Activated CD8-positive, alpha-beta T cell treated with anti-CD3 and anti-CD28 coated beads, Interleukin-2, amount 10 ng/mL, durations not matched to agents 7 days and 5 days (primary cell): ENCODE measurements at regions of chr6 and their contacts with region 1.

Region 1: DNA sequence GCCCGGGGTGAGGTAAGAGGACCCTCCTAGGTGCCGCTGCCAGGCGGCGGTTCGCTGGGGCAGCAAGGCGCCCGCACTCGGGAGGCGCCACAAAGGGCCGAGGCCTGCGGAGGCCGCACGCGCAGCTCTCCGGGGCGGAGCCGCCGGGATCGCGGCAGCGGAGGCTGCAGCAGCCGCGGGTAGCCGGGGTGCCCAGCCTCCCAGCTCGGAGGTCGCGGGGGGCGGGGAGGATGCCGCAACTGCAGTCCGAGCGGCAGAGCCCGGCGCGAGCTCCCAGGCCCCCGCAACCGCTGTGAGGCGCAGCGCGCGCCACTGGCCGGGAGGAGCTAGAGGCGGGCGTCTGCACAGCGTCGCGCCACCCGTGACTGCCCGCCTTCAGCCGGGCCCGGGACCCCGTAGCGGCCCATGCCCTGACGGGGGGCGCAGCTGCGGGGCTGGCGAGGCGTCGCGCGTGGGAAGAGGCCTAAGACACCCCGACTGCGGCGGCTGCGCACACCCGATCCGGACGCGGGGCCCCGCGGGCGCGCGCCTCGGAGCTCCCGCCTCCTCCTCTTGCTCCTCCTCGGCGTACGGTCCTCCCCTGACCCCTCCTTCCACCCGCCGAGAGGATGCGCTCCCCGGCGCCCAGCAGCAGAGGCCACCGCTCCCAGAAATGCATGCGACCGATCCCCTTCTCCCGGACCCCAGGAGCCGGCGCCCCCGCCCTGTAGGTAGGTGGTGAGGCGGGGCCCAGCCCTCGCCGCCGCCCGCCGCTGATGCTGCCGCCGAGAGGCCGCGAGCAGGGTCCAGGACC is at the start of gene NCOA7:
- DNase-seq: peak; percentile 87
- ATAC-seq: peak; percentile 85
- H3K4me3 Mint-ChIP-seq: peak within 1 kb of the TSS; percentile 86
- H3K27ac Mint-ChIP-seq: peak within 1 kb of the TSS; percentile 98
- H3K4me1 Mint-ChIP-seq: peaks cover 45% of the 10 kb centered on the region
- H3K27me3 Mint-ChIP-seq: no peaks in the 10 kb centered on the region
- total RNA-seq, gene NCOA7: 27.8 to 31.7 TPM

Region 2: DNA sequence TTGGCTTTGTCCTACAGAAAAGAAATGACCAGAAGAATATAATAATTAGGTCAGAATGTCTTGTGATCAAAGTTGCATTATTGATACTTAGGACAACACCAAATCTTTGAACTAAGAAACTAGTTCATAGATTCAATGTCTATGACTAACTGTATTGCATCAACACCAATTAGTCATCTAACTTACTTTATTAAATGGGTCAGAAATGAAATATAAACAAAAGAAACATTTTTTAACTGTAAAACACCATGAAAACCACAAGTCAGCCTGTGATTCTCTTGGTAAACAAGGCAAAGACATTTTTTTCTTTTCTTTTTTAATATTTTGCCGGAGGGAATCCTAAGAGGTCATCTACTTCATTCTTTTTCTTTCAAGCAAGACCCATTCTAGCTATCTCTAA is 374.6 kb before region 1 on chr6:
- CTCF ChIA-PET with region 1: no interaction called
- POLR2A ChIA-PET with region 1: no interaction called
- DNase-seq: no peak
- ATAC-seq: no peak
- H3K4me3 Mint-ChIP-seq: no peak overlapping the region
- H3K27ac Mint-ChIP-seq: no peak overlapping the region
- H3K4me1 Mint-ChIP-seq: no peaks in the 10 kb centered on the region
- H3K27me3 Mint-ChIP-seq: peaks cover 3% of the 10 kb centered on the region

Region 3: GRCh38 chr6:125804264-125804663 is 13.7 kb after region 1 on chr6:
- CTCF ChIA-PET with region 1: interaction called, 28 read pairs
- POLR2A ChIA-PET with region 1: interaction called, 13 read pairs
- DNase-seq: no peak
- ATAC-seq: no peak
- H3K4me3 Mint-ChIP-seq: no peak overlapping the region
- H3K27ac Mint-ChIP-seq: peak overlapping the region; percentile 27
- H3K4me1 Mint-ChIP-seq: peaks cover 49% of the 10 kb centered on the region
- H3K27me3 Mint-ChIP-seq: no peaks in the 10 kb centered on the region

Region 4: DNA sequence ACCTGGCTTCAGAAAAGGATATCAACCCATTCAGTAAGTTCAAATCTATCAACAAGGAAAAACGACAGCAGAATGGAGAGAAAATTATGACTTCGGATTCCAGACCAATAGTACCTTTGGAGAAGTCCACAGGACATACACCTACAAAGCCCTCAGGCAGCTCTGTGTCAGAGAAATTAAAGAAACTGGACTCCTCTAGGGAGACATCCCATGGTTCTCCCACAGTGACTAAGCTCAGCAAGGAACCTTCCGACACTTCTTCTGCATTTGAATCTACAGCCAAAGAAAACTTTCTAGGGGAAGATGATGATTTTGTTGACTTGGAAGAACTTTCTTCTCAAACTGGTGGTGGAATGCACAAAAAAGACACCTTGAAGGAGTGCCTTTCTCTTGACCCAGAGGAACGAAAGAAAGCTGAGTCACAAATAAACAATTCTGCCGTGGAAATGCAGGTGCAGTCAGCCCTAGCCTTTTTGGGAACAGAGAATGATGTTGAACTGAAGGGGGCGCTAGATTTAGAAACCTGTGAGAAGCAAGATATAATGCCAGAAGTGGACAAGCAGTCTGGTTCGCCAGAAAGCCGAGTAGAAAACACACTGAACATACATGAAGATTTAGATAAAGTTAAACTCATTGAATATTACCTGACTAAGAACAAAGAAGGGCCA is 98.6 kb after region 1 on chr6:
- CTCF ChIA-PET with region 1: interaction called, 14 read pairs
- POLR2A ChIA-PET with region 1: interaction called, 3 read pairs
- DNase-seq: peak; percentile 27
- ATAC-seq: no peak
- H3K4me3 Mint-ChIP-seq: no peak overlapping the region
- H3K27ac Mint-ChIP-seq: no peak overlapping the region
- H3K4me1 Mint-ChIP-seq: no peaks in the 10 kb centered on the region
- H3K27me3 Mint-ChIP-seq: no peaks in the 10 kb centered on the region

Region 5: GRCh38 chr6:125906158-125906998 is 115.8 kb after region 1 on chr6:
- CTCF ChIA-PET with region 1: interaction called, 13 read pairs
- POLR2A ChIA-PET with region 1: interaction called, 8 read pairs
- DNase-seq: peak; percentile 59
- ATAC-seq: peak; percentile 45
- H3K4me3 Mint-ChIP-seq: no peak overlapping the region
- H3K27ac Mint-ChIP-seq: no peak overlapping the region
- H3K4me1 Mint-ChIP-seq: peaks cover 40% of the 10 kb centered on the region
- H3K27me3 Mint-ChIP-seq: no peaks in the 10 kb centered on the region

Region 6: GRCh38 chr6:125923987-125924568 is 133.5 kb after region 1 on chr6:
- CTCF ChIA-PET with region 1: interaction called, 14 read pairs
- POLR2A ChIA-PET with region 1: interaction called, 47 read pairs
- DNase-seq: peak; percentile 41
- ATAC-seq: peak; percentile 65
- H3K4me3 Mint-ChIP-seq: no peak overlapping the region
- H3K27ac Mint-ChIP-seq: peak overlapping the region; percentile 81
- H3K4me1 Mint-ChIP-seq: peaks cover 45% of the 10 kb centered on the region
- H3K27me3 Mint-ChIP-seq: no peaks in the 10 kb centered on the region

Region 7: GRCh38 chr6:125974214-125974866 is 183.8 kb after region 1 on chr6:
- CTCF ChIA-PET with region 1: interaction called, 35 read pairs
- POLR2A ChIA-PET with region 1: interaction called, 6 read pairs
- DNase-seq: no peak
- ATAC-seq: peak; percentile 81
- H3K4me3 Mint-ChIP-seq: no peak overlapping the region
- H3K27ac Mint-ChIP-seq: no peak overlapping the region
- H3K4me1 Mint-ChIP-seq: peaks cover 6% of the 10 kb centered on the region
- H3K27me3 Mint-ChIP-seq: no peaks in the 10 kb centered on the region